IMR-90 (cell line): ENCODE measurements at regions of chr3 and their contacts with region 1.

Region 1: DNA sequence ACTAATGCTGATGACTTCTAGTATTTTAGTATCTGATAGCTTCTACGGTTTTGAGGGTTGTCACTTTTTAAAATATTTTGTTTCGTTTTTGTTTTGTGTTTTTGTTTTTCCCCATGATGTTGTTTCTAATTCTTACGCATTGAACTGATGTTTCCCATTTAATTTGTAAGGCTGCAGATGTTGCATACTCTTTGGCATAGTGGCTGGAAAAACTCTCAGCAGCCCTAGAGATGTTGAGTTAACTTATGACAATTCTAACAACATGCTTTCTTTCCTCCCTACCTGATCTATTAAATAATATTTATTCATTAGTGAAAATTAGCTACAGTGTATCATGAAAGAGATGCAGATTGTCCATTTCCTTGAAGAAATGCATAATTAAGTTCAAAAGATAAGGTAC is 559.3 kb upstream of the GRM7 start:
- DNase-seq: no peak
- ATAC-seq: no peak
- H3K4me3 ChIP-seq: no peak overlapping the region
- H3K27ac ChIP-seq: no peak overlapping the region
- H3K4me1 ChIP-seq: no peaks in the 10 kb centered on the region
- H3K27me3 ChIP-seq: no peaks in the 10 kb centered on the region
- CTCF ChIP-seq: no peak
- POLR2A ChIP-seq: no peak
- RAD21 ChIP-seq: no peak

Region 2: GRCh38 chr3:6367171-6367570 is 65.5 kb after region 1 on chr3:
- CTCF ChIA-PET with region 1: no interaction called
- POLR2A ChIA-PET with region 1: no interaction called
- dilution Hi-C with region 1: no loop called
- in situ Hi-C with region 1: no loop called
- intact Hi-C with region 1: loop called (anchors 2 kb)
- DNase-seq: no peak
- ATAC-seq: no peak
- H3K4me3 ChIP-seq: no peak overlapping the region
- H3K27ac ChIP-seq: no peak overlapping the region
- H3K4me1 ChIP-seq: no peaks in the 10 kb centered on the region
- H3K27me3 ChIP-seq: no peaks in the 10 kb centered on the region
- CTCF ChIP-seq: no peak
- POLR2A ChIP-seq: no peak
- RAD21 ChIP-seq: no peak